Dendritic cell treated with granulocyte-macrophage colony-stimulating factor and Interleukin-4, amounts not matched to agents 40 ng/mL and 50 ng/mL, for 4 days (primary cell): ENCODE measurements at regions of chr3 and their contacts with region 1.

Region 1: GRCh38 chr3:52056968-52057805 is 816 bp upstream of the DUSP7 start:
- H3K4me3 Mint-ChIP-seq: peak overlapping the region; percentile 74
- H3K27ac Mint-ChIP-seq: peak overlapping the region; percentile 95
- H3K4me1 Mint-ChIP-seq: peaks cover 78% of the 10 kb centered on the region
- H3K27me3 Mint-ChIP-seq: peaks cover 3% of the 10 kb centered on the region

Region 2: GRCh38 chr3:51445544-51446280 is 611.5 kb before region 1 on chr3:
- intact Hi-C with region 1: no loop called
- H3K4me3 Mint-ChIP-seq: no peak overlapping the region
- H3K27ac Mint-ChIP-seq: no peak overlapping the region
- H3K4me1 Mint-ChIP-seq: peaks cover 5% of the 10 kb centered on the region
- H3K27me3 Mint-ChIP-seq: no peaks in the 10 kb centered on the region

Region 3: GRCh38 chr3:51941798-51942602 is 115.2 kb before region 1 on chr3 and contains the starts of genes PARP3 and RRP9:
- intact Hi-C with region 1: loop called (anchors 5 kb)
- H3K4me3 Mint-ChIP-seq: peak within 1 kb of the TSS; percentile 82
- H3K27ac Mint-ChIP-seq: peak within 1 kb of the TSS; percentile 85
- H3K4me1 Mint-ChIP-seq: peaks cover 48% of the 10 kb centered on the region
- H3K27me3 Mint-ChIP-seq: no peaks in the 10 kb centered on the region

Region 4: DNA sequence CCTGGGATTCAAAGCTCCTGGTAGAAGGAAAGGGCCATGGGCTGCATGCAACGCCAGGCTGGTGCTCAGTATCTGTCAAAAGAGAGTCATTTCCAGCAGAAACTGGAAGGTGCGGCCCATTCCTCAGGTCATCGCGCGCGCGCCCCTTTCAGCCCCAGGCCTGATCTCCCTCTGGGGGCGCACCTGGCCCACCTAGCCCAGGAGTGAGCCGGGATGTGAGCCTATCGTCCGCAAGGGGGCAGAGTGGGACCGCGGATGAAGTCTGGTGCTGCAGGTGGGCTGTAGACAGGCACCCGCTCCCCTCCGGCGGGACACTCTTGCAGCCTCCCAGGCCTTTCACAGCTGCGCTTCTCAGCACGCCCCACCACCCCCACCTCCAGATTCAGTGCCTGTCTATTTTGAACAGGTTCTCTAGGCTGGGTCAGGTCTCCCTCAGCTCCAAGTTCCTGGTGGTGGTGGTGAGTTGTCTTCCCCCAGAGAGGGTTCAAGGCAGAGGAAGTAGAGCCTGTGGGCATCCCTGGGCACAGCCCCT is 55.7 kb before region 1 on chr3:
- intact Hi-C with region 1: loop called (anchors 5 kb)
- H3K4me3 Mint-ChIP-seq: no peak overlapping the region
- H3K27ac Mint-ChIP-seq: no peak overlapping the region
- H3K4me1 Mint-ChIP-seq: peaks cover 23% of the 10 kb centered on the region
- H3K27me3 Mint-ChIP-seq: peaks cover 15% of the 10 kb centered on the region

Region 5: GRCh38 chr3:52012699-52013098 is 44.5 kb before region 1 on chr3:
- intact Hi-C with region 1: no loop called
- H3K4me3 Mint-ChIP-seq: no peak overlapping the region
- H3K27ac Mint-ChIP-seq: no peak overlapping the region
- H3K4me1 Mint-ChIP-seq: no peaks in the 10 kb centered on the region
- H3K27me3 Mint-ChIP-seq: peaks cover 4% of the 10 kb centered on the region

Region 6: DNA sequence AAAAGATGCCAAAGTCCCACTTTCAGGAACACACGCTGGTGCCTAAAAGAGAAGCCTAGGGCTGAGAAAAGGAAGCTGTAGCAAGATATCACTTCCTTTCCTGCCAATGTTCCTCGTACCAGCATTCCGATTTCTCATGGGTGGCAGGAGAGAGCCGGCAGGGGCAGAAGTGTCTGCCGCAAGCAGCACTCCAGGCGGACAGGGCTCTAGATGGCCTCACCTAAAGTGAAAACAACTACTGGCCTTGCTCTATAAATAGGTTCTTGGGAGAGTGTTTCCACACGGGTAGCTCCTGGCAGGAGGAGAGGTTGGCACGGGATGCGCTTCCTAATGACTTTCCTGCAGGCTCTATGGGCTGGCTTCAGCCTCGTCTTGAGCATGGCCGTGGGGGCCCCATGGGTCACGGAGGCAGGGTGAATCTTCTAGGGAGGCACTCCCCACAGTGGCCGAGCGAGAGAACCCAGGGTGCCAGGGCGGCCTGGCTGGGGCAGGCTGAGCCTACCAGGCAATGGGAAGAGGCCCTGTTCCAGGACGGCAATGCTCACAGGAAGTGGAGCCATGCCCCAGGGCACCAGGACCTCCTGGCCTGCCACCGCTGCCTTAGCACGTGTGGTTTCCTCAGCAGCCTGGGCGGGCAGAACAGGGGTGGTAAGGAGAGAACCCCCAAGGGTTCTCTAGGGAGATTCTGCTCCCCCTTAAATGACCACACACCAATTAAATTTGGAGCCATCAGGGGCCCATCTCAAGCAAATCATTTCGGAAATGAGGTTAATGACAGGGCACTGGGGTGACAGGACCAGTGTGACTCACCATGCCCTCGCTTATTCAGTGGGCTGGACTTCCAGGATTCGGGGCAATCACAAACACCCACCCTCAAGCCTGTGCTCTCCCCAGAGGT is 13.8 kb after region 1 on chr3:
- intact Hi-C with region 1: loop called (anchors 1 kb)
- H3K4me3 Mint-ChIP-seq: no peak overlapping the region
- H3K27ac Mint-ChIP-seq: peak overlapping the region; percentile 76
- H3K4me1 Mint-ChIP-seq: peaks cover 68% of the 10 kb centered on the region
- H3K27me3 Mint-ChIP-seq: peaks cover 2% of the 10 kb centered on the region

Region 7: DNA sequence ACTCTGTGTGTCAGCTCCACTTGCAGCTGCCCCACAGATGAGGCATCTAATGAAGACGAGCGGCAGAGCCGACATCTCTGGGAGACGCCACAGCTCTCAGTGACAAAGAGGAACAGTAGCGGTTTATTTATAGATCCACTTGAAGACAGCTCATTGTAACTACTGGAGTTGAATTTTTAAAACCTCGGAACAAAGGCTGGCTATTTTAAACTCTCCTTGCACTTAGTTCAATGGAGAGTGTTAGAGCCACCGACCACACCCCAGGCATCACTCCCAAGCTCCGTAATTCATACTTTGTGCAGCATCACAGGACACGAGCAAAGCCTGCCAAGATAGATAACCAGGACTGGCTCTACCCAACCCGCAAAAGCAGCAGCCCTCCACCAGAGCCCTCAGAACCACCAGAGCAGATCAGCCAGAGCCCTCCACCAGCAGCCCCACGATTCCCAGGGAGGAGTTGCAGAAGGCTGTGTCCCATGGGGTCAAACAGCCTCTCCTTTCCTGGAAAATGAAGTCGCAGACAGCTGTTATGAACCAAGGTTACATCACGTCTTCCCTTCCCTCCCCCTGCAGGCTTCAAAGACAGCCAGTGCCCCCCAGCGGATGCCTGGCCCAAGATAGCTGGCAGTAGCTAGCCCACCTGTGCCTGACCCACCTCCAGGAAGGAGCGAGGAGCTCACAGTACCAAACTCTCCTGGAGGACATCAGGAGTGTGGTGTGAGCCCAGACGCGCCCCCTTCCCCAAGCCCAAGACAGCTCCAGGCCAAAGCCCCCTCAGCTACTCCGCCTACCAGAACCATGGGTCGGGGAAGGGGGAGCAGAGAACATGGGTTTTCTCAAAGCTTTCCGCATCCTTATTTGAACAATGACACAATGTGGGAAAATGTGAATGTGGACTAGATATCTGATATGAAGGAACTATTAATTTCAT is 51.4 kb after region 1 on chr3:
- intact Hi-C with region 1: no loop called
- H3K4me3 Mint-ChIP-seq: no peak overlapping the region
- H3K27ac Mint-ChIP-seq: peak overlapping the region; percentile 63
- H3K4me1 Mint-ChIP-seq: peaks cover 30% of the 10 kb centered on the region
- H3K27me3 Mint-ChIP-seq: no peaks in the 10 kb centered on the region

Region 8: DNA sequence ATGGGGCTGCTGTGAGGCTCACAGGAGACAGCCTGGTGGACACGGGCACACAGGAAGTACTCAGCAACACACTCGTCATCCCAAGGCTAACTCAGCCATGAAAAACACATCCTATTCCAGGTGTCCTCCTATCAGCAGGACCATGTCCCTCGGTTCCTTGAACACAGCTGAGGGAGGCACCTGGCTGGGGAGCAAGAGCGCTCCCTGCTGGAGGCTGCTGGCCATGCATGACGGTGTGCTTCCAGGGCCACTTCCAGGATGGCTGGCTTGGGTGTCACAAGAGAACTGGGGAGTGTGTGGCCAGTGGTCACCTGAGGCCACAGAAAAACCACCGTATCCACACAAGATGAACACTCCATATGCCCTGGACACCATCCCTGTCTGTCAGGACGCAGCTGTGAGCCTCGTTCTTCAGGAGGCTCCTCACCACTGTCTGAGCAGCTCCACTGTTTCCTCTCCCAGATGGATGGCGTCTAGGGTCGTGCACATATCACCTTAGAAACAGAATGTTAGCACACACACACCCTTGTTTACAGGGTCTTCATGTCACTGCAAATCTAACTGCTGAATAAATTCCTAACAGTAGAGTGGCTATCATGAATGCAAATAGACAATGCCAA is 66.0 kb after region 1 on chr3:
- intact Hi-C with region 1: loop called (anchors 1 kb)
- H3K4me3 Mint-ChIP-seq: no peak overlapping the region
- H3K27ac Mint-ChIP-seq: peak overlapping the region; percentile 92
- H3K4me1 Mint-ChIP-seq: peaks cover 64% of the 10 kb centered on the region
- H3K27me3 Mint-ChIP-seq: no peaks in the 10 kb centered on the region

Region 9: GRCh38 chr3:52333869-52334557 is 276.8 kb after region 1 on chr3:
- intact Hi-C with region 1: no loop called
- H3K4me3 Mint-ChIP-seq: no peak overlapping the region
- H3K27ac Mint-ChIP-seq: no peak overlapping the region
- H3K4me1 Mint-ChIP-seq: no peaks in the 10 kb centered on the region
- H3K27me3 Mint-ChIP-seq: no peaks in the 10 kb centered on the region